AG04449 (cell line): ENCODE measurements at regions of chr7 and their contacts with region 1.

Region 1: DNA sequence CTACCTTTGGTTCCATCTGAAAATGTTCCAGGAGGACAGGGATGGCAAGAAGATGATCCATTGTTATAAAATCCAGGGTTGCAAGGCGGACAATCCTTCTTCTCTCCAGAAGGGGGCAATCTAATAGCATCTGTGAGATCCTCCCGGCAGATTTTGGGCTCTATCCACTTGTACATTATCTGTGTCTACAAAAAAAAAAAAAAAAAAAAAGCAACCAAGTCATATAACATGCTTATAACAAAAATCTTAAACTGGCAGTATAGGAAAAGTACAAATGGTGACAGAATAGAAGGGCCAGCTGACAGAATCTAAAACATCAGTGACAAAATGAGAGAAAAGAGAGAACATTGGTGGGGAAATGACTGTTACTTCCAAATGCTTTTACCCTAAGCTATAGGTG is 132.7 kb downstream of the ELAPOR2 start:
- DNase-seq: no peak
- H3K4me3 ChIP-seq: no peak overlapping the region
- CTCF ChIP-seq: peak; percentile 62

Region 2: GRCh38 chr7:86372262-86372661 is 554.5 kb before region 1 on chr7:
- CTCF ChIA-PET with region 1: no interaction called
- POLR2A ChIA-PET with region 1: no interaction called
- DNase-seq: no peak
- H3K4me3 ChIP-seq: no peak overlapping the region
- CTCF ChIP-seq: no peak

Region 3: DNA sequence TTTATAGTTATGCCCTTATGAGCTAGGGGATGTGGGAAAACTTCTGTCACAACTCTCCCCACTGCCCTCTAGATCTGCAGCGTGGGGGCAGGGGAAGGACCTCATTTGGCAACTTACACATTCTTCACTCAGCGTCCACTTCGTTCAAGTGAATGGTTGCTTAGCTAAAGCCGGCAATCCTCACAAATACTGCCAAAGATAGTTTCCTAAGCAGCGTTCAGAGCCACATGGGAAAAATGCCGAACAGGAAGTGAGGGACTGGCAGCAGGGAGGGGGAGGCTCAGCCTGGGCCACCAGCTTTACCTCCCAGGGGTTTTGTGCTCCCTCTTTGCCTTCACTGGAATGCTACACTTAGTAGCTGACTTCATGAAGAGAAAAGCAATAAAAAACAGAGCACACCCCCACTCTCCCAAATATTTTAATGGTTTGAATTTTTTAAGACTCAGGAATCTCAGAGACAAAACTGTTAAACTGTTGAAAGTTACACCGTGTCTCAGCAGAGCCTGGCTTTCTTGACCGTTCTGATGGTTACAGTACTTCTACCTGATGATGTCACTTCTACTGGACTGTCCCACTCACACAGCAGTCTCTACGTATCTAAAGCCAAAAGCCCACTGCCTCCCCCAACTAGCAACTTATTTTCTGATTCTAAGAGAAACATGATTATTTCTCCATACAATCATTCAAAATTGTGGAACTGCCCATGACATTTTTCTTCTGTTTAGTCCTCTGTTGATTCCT is 272.6 kb before region 1 on chr7:
- CTCF ChIA-PET with region 1: no interaction called
- POLR2A ChIA-PET with region 1: no interaction called
- DNase-seq: no peak
- H3K4me3 ChIP-seq: no peak overlapping the region
- CTCF ChIP-seq: no peak

Region 4: GRCh38 chr7:86914551-86914950 is 12.2 kb before region 1 on chr7:
- CTCF ChIA-PET with region 1: interaction called, 13 read pairs
- POLR2A ChIA-PET with region 1: no interaction called
- DNase-seq: no peak
- H3K4me3 ChIP-seq: no peak overlapping the region
- CTCF ChIP-seq: peak; percentile 12

Region 5: DNA sequence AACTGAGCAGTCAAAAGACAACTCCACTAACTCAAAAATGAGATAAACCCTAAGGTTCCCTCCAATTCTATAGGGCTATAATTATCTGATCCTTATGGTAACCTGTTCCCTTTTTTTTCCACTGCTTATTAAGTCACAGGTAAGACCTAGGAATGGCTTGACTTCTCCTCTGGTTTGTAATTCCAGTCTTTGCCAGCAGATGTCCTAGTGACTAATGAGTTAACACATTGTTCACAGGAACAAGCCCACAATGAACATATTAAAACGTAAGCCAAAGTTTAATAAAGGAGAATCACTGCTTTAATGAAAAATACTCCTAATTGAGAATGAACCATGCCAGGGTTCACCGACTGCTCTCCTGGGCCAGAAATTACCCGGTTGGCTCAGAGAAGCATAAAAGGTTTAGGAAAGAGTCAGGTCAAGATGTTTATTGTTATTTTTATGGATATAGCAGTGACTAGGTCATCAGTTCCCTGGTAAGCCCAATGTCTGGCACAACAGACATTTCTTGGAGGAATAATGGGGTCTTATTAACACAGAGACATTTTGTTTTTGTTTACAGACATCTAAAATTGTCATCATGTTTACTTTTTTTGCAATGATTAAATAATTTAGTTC is 12.6 kb after region 1 on chr7:
- CTCF ChIA-PET with region 1: interaction called, 10 read pairs
- POLR2A ChIA-PET with region 1: no interaction called
- DNase-seq: no peak
- H3K4me3 ChIP-seq: no peak overlapping the region
- CTCF ChIP-seq: peak; percentile 60

Region 6: DNA sequence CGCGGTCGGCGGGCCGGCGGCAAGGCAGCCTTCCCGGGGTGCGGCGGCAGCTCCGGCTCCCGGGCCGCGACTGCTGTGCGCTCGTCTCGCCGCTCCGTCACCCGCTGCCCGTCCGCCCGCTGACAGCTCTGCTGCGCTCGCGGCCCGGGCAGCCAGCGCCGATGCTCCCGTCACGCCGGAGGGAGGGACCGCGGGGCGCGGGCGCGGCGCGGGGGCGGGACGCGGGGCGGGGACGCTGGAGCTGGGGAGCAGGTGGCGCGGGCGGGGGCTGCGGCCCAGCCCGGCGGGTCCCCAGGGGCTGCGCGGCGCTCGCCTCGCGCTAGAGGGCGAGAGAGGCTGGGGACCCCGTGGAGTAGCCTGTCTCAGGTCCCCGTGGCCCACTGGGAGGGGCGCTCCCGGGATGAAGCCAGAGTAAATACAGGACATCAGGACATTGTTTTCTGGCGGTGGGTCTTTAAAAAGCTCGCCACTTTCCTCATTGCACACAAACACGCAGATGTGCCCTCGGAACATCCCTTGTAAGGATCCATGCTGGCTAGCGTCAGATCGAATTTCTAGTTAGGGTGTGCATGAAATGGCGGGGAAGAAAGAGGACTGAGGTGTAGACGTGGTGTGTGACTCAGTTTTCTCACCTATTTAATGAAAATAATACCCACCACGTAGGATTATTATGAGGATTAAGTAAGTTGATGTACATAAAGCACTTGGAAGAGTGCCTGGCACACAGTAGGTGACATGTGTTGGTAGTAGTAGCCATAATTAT is 133.0 kb after region 1 on chr7 and contains the start of gene ELAPOR2:
- CTCF ChIA-PET with region 1: no interaction called
- POLR2A ChIA-PET with region 1: no interaction called
- DNase-seq: no peak
- H3K4me3 ChIP-seq: peak within 1 kb of the TSS; percentile 58
- CTCF ChIP-seq: peak; percentile 24

Region 7: GRCh38 chr7:87152107-87152844 is 225.5 kb after region 1 on chr7 and contains the start of gene DMTF1:
- CTCF ChIA-PET with region 1: interaction called, 87 read pairs
- POLR2A ChIA-PET with region 1: interaction called, 3 read pairs
- DNase-seq: peak; percentile 59
- H3K4me3 ChIP-seq: peak within 1 kb of the TSS; percentile 80
- CTCF ChIP-seq: no peak

Region 8: GRCh38 chr7:87231256-87231655 is 304.5 kb after region 1 on chr7:
- CTCF ChIA-PET with region 1: interaction called, 55 read pairs
- POLR2A ChIA-PET with region 1: no interaction called
- DNase-seq: no peak
- H3K4me3 ChIP-seq: no peak overlapping the region
- CTCF ChIP-seq: no peak

Region 9: DNA sequence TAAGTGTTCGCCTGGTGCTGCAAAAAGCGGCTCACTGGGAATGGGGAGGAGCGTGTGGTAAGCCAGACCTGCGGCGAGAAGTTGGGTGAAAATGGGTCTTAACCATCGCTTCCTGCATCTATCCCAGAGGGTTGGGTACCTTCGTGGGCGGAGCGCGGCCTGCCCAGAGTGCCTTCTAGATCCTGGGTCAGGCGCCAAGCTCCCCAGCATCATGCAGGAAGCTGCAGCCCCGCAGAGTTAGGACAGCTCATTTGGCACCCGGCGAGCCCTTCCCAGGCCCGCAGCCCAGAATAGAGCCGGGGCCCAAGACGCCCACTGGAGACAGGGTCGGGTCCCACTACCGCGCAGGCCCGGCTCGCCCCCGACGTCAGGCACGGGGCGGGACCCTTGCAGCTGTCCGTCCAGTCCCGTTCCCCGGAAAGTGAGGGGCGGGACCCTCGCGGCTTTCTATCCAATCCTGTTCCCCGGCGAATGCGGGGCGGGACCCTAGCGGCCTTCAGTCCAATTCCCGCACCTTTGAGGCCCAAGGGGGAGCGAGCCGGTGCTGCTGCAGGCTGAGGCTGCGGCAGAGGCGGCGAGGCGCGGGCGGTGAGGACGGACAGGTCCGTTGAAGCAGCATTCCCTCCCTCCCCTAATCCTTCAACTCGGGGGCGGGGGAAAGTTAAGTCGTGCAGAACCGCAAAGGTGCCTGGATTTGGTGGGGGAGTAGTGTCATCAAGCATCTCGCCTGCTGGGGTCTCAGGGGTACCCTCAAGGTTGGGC is 418.6 kb after region 1 on chr7 and contains the start of gene CROT:
- CTCF ChIA-PET with region 1: no interaction called
- POLR2A ChIA-PET with region 1: no interaction called
- DNase-seq: peak; percentile 59
- H3K4me3 ChIP-seq: peak within 1 kb of the TSS; percentile 77
- CTCF ChIP-seq: no peak